ENCODE measurements at regions of chr2 and their contacts with region 1.

Region 1: GRCh38 chr2:238263204-238264071 is 23.6 kb upstream of the HES6 start:
- DNase-seq: peak; percentile 83
- H3K4me3 Mint-ChIP-seq: no peak overlapping the region
- H3K27ac Mint-ChIP-seq: no peak overlapping the region
- H3K4me1 Mint-ChIP-seq: peaks cover 20% of the 10 kb centered on the region
- H3K27me3 Mint-ChIP-seq: no peaks in the 10 kb centered on the region

Region 2: GRCh38 chr2:237858294-237859081 is 404.9 kb before region 1 on chr2:
- CTCF ChIA-PET with region 1: interaction called, 21 read pairs
- POLR2A ChIA-PET with region 1: no interaction called
- DNase-seq: peak; percentile 64
- H3K4me3 Mint-ChIP-seq: peak overlapping the region; percentile 46
- H3K27ac Mint-ChIP-seq: no peak overlapping the region
- H3K4me1 Mint-ChIP-seq: peaks cover 18% of the 10 kb centered on the region
- H3K27me3 Mint-ChIP-seq: peaks cover 53% of the 10 kb centered on the region

Region 3: GRCh38 chr2:238252766-238253630 is 10.4 kb before region 1 on chr2:
- CTCF ChIA-PET with region 1: interaction called, 14 read pairs
- POLR2A ChIA-PET with region 1: no interaction called
- DNase-seq: no peak
- H3K4me3 Mint-ChIP-seq: no peak overlapping the region
- H3K27ac Mint-ChIP-seq: no peak overlapping the region
- H3K4me1 Mint-ChIP-seq: no peaks in the 10 kb centered on the region
- H3K27me3 Mint-ChIP-seq: no peaks in the 10 kb centered on the region

Region 4: DNA sequence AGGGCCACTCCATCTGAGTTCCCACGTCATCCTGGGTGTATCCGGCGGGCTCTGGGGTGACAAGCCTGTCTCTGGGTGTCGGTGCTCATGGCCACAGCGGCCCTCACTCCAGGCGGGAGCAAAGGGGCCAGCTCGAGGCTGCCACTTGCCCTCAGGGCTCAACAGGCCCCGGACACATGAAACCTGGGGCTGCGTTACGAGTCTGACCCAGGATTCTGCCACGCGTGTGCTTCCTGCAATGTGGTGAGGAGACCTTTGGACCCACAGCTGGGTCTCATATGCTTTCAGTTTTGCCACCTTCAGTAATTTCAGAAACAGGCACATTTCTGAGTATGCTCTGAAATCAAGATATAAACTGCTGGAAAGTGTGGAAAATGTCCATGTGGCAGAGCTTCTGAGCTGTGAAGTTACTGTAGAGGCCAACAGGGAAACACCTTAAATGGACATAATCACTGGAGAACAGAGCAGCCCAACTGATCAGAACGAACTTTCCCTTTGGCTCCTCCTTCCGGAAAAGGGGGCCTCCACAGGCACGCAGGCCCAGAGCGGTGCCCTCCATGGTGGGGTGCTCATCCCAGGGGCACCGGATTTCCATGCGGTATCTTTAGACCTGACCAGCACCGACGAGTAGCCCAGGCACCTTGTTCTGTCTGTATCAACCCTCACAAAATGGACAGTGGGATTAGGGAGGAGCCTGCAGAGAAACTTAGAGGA is 10.9 kb after region 1 on chr2:
- CTCF ChIA-PET with region 1: interaction called, 27 read pairs
- POLR2A ChIA-PET with region 1: no interaction called
- DNase-seq: no peak
- H3K4me3 Mint-ChIP-seq: no peak overlapping the region
- H3K27ac Mint-ChIP-seq: no peak overlapping the region
- H3K4me1 Mint-ChIP-seq: no peaks in the 10 kb centered on the region
- H3K27me3 Mint-ChIP-seq: no peaks in the 10 kb centered on the region

Region 5: GRCh38 chr2:238288650-238289573 is 25.5 kb after region 1 on chr2:
- CTCF ChIA-PET with region 1: interaction called, 13 read pairs
- POLR2A ChIA-PET with region 1: interaction called, 3 read pairs
- DNase-seq: peak; percentile 98
- H3K4me3 Mint-ChIP-seq: peak overlapping the region; percentile 87
- H3K27ac Mint-ChIP-seq: peak overlapping the region; percentile 82
- H3K4me1 Mint-ChIP-seq: peaks cover 25% of the 10 kb centered on the region
- H3K27me3 Mint-ChIP-seq: no peaks in the 10 kb centered on the region

Measured in activated CD4-positive, alpha-beta memory T cell treated with anti-CD3 and anti-CD28 coated beads, Interleukin-2, amount 10 ng/mL, durations not matched to agents 7 days and 5 days (primary cell).